H1 (cell line): ENCODE measurements at regions of chr13 and their contacts with region 1.

Region 1: DNA sequence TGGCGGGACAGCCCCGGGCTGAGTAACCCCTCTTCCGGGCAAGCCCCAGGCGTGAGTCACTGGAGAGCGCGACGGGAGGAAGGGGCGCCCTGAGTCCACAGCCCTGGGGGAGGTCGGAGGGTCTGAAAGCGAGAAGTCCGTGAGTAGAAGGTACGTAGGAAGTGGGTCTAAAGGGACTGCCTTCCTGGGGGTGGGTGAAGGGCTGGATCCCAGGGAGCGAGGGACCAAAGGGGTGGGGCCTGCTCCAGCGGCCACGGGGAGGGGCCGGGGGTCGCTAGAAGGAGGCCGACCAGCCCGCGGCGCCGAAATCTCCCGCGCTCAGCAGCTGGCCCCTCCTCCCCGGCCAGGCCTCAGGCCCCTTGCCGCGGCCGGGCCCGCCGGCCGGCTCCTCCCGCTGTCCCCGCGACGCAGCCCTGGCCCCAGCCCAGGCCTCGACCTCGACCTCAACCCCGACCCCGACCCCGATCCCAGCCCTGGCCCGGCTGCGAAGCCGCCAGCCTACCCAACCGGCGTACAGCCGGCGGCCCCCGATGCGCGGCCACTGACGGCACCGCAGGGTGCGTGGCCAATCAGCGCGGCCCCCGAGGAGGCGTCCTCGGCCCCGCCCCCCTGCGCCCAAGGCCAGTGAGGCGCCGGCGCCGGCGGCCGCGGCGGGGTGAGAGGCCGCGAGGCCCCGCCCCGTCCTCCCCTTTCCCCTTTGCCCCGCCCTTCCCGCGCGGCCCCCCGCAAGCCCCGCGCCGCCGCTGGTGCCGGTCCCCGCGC is 22.6 kb downstream of the IPO5 start:
- DNase-seq: peak; percentile 73 to 94
- H3K4me3 ChIP-seq: peak overlapping the region; percentile 77 to 98 (median 88)
- H3K27ac ChIP-seq: peak overlapping the region; percentile 93
- H3K4me1 ChIP-seq: peaks cover 0 to 4% (median 1%) of the 10 kb centered on the region in 4 experiments; a peak in 2 of 7 replicates
- H3K27me3 ChIP-seq: no peaks in the 10 kb centered on the region
- CTCF ChIP-seq: no peak
- EP300 ChIP-seq: peak in 1 of 2 experiments; percentile 48; a peak in 1 of 3 replicates
- POLR2A ChIP-seq: peak; percentile 95 to 98
- RAD21 ChIP-seq: no peak; a peak in 1 of 4 replicates

Region 2: DNA sequence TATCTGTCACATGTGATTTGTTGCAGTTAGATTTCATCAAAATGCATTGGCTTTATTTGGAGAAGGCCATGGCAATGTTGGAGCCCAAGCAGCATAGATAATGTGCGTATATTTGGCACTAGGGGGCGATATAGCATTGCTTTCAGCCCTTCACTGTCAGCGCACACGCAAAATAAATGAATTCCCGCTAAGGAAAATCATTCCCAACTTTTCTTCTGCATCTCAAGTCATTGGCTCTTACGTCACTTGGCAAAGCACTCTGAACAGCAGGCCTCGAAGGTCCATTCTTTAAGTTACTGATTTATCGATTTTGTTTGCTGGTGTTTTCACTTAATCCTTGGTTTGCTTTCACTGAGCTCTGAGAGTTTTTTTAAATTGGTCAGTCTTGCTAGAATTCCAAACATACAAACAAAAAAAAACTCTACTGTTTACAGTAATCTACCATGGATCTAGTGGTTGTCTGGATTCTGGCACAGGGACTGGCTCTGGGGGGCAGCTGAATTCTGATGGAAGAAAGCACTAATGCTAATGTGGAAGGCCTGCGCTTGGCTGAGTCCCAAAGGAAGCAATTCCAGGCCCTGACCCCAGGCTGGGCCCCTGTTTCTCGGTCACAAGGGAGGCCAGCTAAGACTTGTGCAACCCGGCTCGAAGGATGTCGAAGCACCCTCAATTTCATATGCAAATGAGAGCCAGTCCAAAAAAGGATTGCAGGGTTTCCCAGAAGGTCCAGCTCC is 120.3 kb before region 1 on chr13:
- CTCF ChIA-PET with region 1: interaction called, 11 read pairs
- POLR2A ChIA-PET with region 1: interaction called, 5 read pairs
- DNase-seq: no peak
- H3K4me3 ChIP-seq: no peak overlapping the region
- H3K27ac ChIP-seq: no peak overlapping the region
- H3K4me1 ChIP-seq: peaks cover 0 to 2% (median 0%) of the 10 kb centered on the region in 4 experiments; a peak in 2 of 7 replicates
- H3K27me3 ChIP-seq: no peaks in the 10 kb centered on the region
- CTCF ChIP-seq: peak; percentile 38 to 82 (median 81)
- EP300 ChIP-seq: no peak
- POLR2A ChIP-seq: no peak
- RAD21 ChIP-seq: peak; percentile 93 to 94

Region 3: GRCh38 chr13:97889803-97890202 is 86.2 kb before region 1 on chr13:
- CTCF ChIA-PET with region 1: no interaction called
- POLR2A ChIA-PET with region 1: no interaction called
- DNase-seq: no peak
- H3K4me3 ChIP-seq: no peak overlapping the region
- H3K27ac ChIP-seq: no peak overlapping the region
- H3K4me1 ChIP-seq: no peaks in the 10 kb centered on the region; a peak in 1 of 7 replicates
- H3K27me3 ChIP-seq: no peaks in the 10 kb centered on the region
- CTCF ChIP-seq: no peak
- EP300 ChIP-seq: no peak
- POLR2A ChIP-seq: no peak
- RAD21 ChIP-seq: no peak

Region 4: GRCh38 chr13:97986835-97987234 is 10.8 kb after region 1 on chr13:
- CTCF ChIA-PET with region 1: interaction called, 4 read pairs
- POLR2A ChIA-PET with region 1: interaction called, 12 read pairs
- DNase-seq: no peak
- H3K4me3 ChIP-seq: no peak overlapping the region
- H3K27ac ChIP-seq: no peak overlapping the region
- H3K4me1 ChIP-seq: no peaks in the 10 kb centered on the region
- H3K27me3 ChIP-seq: no peaks in the 10 kb centered on the region
- CTCF ChIP-seq: no peak
- EP300 ChIP-seq: no peak
- POLR2A ChIP-seq: no peak
- RAD21 ChIP-seq: no peak

Region 5: DNA sequence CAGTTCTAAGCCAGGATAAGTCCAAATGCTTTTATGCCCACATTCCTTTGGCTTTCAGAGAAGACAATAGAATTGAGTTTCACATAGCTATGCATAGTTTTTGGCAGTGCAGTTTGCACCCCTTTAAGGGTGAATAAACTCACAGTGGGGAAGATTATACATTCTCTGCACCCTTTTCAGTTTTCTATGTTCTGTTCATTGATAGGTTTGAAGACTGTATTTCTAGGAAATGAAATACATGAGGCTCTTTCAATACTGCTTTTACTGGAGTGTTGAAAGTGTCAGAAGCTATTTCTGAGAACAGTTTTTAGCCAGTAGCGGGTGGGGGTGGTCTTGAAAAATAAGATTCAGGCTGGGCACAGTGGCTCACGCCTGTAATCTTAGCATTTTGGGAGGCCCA is 23.6 kb after region 1 on chr13:
- CTCF ChIA-PET with region 1: no interaction called
- POLR2A ChIA-PET with region 1: interaction called, 19 read pairs
- DNase-seq: no peak
- H3K4me3 ChIP-seq: no peak overlapping the region
- H3K27ac ChIP-seq: no peak overlapping the region
- H3K4me1 ChIP-seq: no peaks in the 10 kb centered on the region
- H3K27me3 ChIP-seq: no peaks in the 10 kb centered on the region
- CTCF ChIP-seq: no peak
- EP300 ChIP-seq: no peak
- POLR2A ChIP-seq: no peak
- RAD21 ChIP-seq: no peak